B cell (primary cell): ENCODE measurements at regions of chr20 and their contacts with region 1.

Region 1: GRCh38 chr20:50691573-50692551 is 520 bp upstream of the RIPOR3 start:
- DNase-seq: no peak
- ATAC-seq: no peak
- H3K4me3 ChIP-seq: no peak overlapping the region
- H3K4me3 Mint-ChIP-seq: no peak overlapping the region
- H3K27ac ChIP-seq: no peak overlapping the region
- H3K27ac Mint-ChIP-seq: no peak overlapping the region
- H3K4me1 ChIP-seq: peaks cover 12% of the 10 kb centered on the region in 2 donors
- H3K4me1 Mint-ChIP-seq: peaks cover 11% of the 10 kb centered on the region
- H3K27me3 ChIP-seq: peaks cover 0 to 49% (median 9%) of the 10 kb centered on the region in 4 experiments
- H3K27me3 Mint-ChIP-seq: peaks cover 50% of the 10 kb centered on the region
- CTCF ChIP-seq: no peak

Region 2: GRCh38 chr20:50724851-50725721 is 33.2 kb after region 1 on chr20:
- CTCF ChIA-PET with region 1: no interaction called
- POLR2A ChIA-PET with region 1: no interaction called
- intact Hi-C with region 1: no loop called
- DNase-seq: no peak
- ATAC-seq: no peak
- H3K4me3 ChIP-seq: no peak overlapping the region
- H3K4me3 Mint-ChIP-seq: no peak overlapping the region
- H3K27ac ChIP-seq: no peak overlapping the region
- H3K27ac Mint-ChIP-seq: no peak overlapping the region
- H3K4me1 ChIP-seq: peaks cover under 1% of the 10 kb centered on the region in 2 donors
- H3K4me1 Mint-ChIP-seq: no peaks in the 10 kb centered on the region
- H3K27me3 ChIP-seq: no peaks in the 10 kb centered on the region
- H3K27me3 Mint-ChIP-seq: peaks cover 7% of the 10 kb centered on the region
- CTCF ChIP-seq: no peak

Region 3: DNA sequence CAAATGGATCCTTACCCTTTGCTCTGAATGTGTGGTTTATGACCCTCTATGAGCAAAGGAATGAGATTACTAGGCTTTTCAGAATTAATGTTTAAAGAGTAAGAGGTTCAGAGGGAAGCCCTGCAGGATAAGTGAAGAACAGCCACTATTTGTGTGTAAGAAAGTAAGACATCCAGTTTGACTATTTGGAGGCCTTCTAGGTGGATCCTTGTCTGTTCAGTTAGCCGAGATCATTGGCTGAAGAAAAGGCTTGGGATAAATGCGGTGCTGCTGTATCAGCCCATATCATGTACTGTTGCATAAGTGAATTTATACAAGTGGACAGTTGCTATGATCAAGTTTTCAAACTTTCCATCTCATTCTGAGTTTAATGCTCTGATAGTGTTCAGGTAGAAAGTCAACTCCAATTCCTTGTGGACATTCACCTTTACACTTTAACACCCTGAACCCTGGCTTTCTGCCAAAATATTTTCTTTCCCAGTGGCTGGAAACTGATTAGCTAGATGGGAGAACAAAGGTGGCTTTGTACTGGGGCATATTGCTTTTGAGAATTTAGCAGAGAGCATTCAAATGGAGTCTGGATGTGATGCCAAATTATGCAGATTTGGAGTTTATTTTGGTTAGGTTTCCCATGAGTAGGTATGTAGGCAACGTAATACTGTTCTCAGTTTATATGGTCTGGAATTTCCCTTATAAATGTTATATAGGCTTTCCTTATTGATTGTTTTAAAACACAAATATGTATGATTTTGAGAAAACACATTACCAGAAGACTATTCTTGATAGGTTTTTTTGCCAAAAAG is 54.5 kb after region 1 on chr20:
- CTCF ChIA-PET with region 1: interaction called, 3 read pairs
- POLR2A ChIA-PET with region 1: interaction called, 10 read pairs
- intact Hi-C with region 1: no loop called
- DNase-seq: no peak
- ATAC-seq: no peak
- H3K4me3 ChIP-seq: no peak overlapping the region
- H3K4me3 Mint-ChIP-seq: no peak overlapping the region
- H3K27ac ChIP-seq: no peak overlapping the region
- H3K27ac Mint-ChIP-seq: no peak overlapping the region
- H3K4me1 ChIP-seq: peaks cover 0 to 3% of the 10 kb centered on the region in 2 donors
- H3K4me1 Mint-ChIP-seq: peaks cover 6% of the 10 kb centered on the region
- H3K27me3 ChIP-seq: no peaks in the 10 kb centered on the region
- H3K27me3 Mint-ChIP-seq: no peaks in the 10 kb centered on the region
- CTCF ChIP-seq: no peak

Region 4: GRCh38 chr20:50794846-50795634 is 103.2 kb after region 1 on chr20 and contains the start of gene BCAS4:
- CTCF ChIA-PET with region 1: no interaction called
- POLR2A ChIA-PET with region 1: no interaction called
- intact Hi-C with region 1: no loop called
- DNase-seq: peak; percentile 93
- ATAC-seq: peak; percentile 82
- H3K4me3 ChIP-seq: peak within 1 kb of the TSS; percentile 13 to 98 (median 96)
- H3K4me3 Mint-ChIP-seq: peak within 1 kb of the TSS; percentile 98
- H3K27ac ChIP-seq: peak within 1 kb of the TSS; percentile 71 to 81
- H3K27ac Mint-ChIP-seq: peak within 1 kb of the TSS; percentile 96
- H3K4me1 ChIP-seq: peaks cover 40 to 56% of the 10 kb centered on the region in 2 donors
- H3K4me1 Mint-ChIP-seq: peaks cover 44% of the 10 kb centered on the region
- H3K27me3 ChIP-seq: no peaks in the 10 kb centered on the region
- H3K27me3 Mint-ChIP-seq: no peaks in the 10 kb centered on the region
- CTCF ChIP-seq: peak; percentile 79
- total RNA-seq, gene BCAS4: 88.2 and 91.0 TPM in 2 replicates